Naive thymus-derived CD4-positive, alpha-beta T cell (primary cell): ENCODE measurements at regions of chr19 and their contacts with region 1.

Region 1: DNA sequence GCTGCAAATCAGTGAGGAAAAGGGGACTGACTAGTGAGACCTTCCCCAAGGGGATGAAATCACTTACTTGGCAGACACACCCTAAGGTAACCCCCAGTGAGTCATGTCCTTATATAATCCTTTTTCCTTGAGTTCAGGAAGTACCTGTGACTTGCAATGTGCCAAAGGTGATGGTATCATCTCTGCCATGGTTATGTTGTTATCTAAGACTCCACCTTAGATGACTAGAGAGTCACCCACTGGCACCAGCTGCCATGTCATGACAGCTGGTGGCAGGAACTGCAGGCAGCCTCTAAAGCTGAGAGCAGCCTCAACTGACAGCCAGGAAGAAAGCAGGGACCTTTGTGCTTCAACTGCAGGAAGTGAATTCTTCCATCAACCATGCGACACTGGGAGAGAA is 12.5 kb downstream of the PBX4 start:
- DNase-seq: peak in 7 of 9 donors; percentile 33 to 83 (median 61)
- ATAC-seq: peak; percentile 83
- H3K4me3 ChIP-seq: no peak overlapping the region
- H3K4me3 Mint-ChIP-seq: peak overlapping the region; percentile 42 to 76 (median 71)
- H3K27ac ChIP-seq: peak overlapping the region; percentile 46
- H3K27ac Mint-ChIP-seq: peak overlapping the region; percentile 66 to 96 (median 91)
- H3K4me1 ChIP-seq: peaks cover 42 to 54% of the 10 kb centered on the region in 2 donors
- H3K4me1 Mint-ChIP-seq: peaks cover 29 to 66% (median 55%) of the 10 kb centered on the region in 7 donors
- H3K27me3 ChIP-seq: no peaks in the 10 kb centered on the region
- H3K27me3 Mint-ChIP-seq: no peaks in the 10 kb centered on the region

Region 2: DNA sequence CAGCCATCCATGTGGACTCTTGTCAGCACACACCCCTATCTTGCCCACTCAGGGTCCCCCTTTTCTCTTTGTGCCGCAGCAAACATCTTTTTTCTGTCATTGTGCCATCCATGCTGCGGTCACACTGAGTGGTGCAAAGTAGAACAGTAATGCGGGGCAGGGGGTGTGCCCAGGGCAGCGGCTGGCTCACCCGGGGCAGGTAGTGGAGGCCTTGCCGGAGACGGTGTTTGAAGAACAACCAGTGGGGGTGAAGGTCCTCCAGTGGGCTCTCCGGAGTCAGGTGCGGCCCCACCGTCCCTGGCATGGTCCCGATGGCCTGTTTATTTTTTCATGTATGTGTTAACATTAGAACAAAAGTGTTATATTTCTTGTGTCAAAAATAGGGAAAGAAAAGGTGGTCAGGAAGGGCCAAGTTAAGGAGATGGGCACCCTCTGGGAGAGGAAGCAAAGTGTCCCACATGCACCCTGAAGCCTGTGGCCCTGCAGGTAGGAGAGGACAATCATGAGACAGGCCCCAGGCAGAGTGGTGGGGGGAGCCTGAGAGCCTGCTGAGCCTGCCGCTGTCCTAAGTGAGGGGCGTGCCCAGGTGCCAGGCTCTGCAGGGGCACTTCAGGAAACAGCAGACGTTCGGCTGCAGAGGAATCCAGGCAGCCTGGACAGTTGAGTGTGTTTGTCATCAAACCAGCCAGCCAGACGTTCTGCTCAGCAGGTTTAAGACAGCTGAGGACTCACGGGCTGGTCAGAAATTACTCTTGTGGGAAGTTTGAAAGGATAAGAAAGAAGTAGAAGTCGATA is 103.0 kb before region 1 on chr19:
- CTCF ChIA-PET with region 1: no interaction called
- POLR2A ChIA-PET with region 1: no interaction called
- intact Hi-C with region 1: no loop called
- DNase-seq: no peak
- ATAC-seq: no peak
- H3K4me3 ChIP-seq: no peak overlapping the region
- H3K4me3 Mint-ChIP-seq: peak overlapping the region in 1 of 10 donors; percentile 20
- H3K27ac ChIP-seq: no peak overlapping the region
- H3K27ac Mint-ChIP-seq: peak overlapping the region in 3 of 9 donors; percentile 30 to 77 (median 74)
- H3K4me1 ChIP-seq: no peaks in the 10 kb centered on the region
- H3K4me1 Mint-ChIP-seq: no peaks in the 10 kb centered on the region
- H3K27me3 ChIP-seq: no peaks in the 10 kb centered on the region
- H3K27me3 Mint-ChIP-seq: no peaks in the 10 kb centered on the region

Region 3: DNA sequence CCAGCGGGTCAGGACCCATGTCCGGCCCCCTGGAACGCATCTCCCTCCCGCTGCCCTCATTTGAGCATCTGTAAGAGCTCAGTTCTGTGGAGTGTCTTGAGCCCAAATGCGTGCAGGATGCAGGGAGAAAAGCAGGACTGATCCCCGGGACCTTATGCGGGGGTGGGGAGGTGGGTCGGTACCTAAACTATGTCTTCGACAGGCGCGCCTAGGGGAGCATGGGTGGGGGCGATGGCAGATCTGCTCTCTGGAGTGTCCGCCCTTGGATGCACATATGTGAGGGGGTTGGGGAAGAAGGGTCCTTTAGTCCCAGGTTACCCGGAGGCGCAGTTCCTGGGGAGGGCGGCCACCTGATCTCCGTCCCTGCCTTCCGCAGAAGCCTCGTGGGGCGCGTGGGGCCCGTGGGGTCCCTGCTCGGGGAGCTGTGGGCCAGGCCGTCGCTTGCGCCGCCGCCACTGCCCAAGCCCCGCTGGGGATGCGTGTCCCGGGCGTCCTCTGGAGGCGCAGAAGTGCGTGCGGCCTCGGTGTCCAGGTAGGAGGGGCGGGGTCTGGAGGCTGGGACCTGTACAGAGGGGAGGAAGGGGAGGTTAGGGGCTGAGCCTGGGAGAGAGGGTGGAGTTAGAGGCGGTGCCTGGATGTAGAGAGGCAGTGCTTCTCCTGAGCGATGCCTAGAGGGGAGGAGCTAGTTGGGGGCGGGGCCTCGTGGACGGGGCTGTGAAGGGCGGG is 65.1 kb before region 1 on chr19:
- CTCF ChIA-PET with region 1: no interaction called
- POLR2A ChIA-PET with region 1: no interaction called
- intact Hi-C with region 1: loop called in 1 of 2 experiments (anchors 2 kb)
- DNase-seq: peak; percentile 49 to 79 (median 69)
- ATAC-seq: peak; percentile 86
- H3K4me3 ChIP-seq: peak overlapping the region; percentile 50
- H3K4me3 Mint-ChIP-seq: peak overlapping the region; percentile 58 to 85 (median 77)
- H3K27ac ChIP-seq: no peak overlapping the region
- H3K27ac Mint-ChIP-seq: peak overlapping the region in 3 of 9 donors; percentile 43 to 81 (median 66)
- H3K4me1 ChIP-seq: peaks cover 15 to 25% of the 10 kb centered on the region in 2 donors
- H3K4me1 Mint-ChIP-seq: peaks cover 8 to 36% (median 29%) of the 10 kb centered on the region in 7 donors
- H3K27me3 ChIP-seq: no peaks in the 10 kb centered on the region
- H3K27me3 Mint-ChIP-seq: peaks cover 0 to 31% (median 4%) of the 10 kb centered on the region in 5 donors

Region 4: GRCh38 chr19:19554074-19555023 is 51.7 kb before region 1 on chr19:
- CTCF ChIA-PET with region 1: interaction called, 5 read pairs
- POLR2A ChIA-PET with region 1: interaction called, 22 read pairs
- intact Hi-C with region 1: no loop called
- DNase-seq: peak in 4 of 9 donors; percentile 37 to 73 (median 52)
- ATAC-seq: peak; percentile 67
- H3K4me3 ChIP-seq: no peak overlapping the region
- H3K4me3 Mint-ChIP-seq: no peak overlapping the region
- H3K27ac ChIP-seq: no peak overlapping the region
- H3K27ac Mint-ChIP-seq: peak overlapping the region in 2 of 9 donors; percentile 46 to 77
- H3K4me1 ChIP-seq: peaks cover 0 to 6% of the 10 kb centered on the region in 2 donors
- H3K4me1 Mint-ChIP-seq: peaks cover 7 to 16% (median 13%) of the 10 kb centered on the region in 7 donors
- H3K27me3 ChIP-seq: no peaks in the 10 kb centered on the region
- H3K27me3 Mint-ChIP-seq: no peaks in the 10 kb centered on the region

Region 5: DNA sequence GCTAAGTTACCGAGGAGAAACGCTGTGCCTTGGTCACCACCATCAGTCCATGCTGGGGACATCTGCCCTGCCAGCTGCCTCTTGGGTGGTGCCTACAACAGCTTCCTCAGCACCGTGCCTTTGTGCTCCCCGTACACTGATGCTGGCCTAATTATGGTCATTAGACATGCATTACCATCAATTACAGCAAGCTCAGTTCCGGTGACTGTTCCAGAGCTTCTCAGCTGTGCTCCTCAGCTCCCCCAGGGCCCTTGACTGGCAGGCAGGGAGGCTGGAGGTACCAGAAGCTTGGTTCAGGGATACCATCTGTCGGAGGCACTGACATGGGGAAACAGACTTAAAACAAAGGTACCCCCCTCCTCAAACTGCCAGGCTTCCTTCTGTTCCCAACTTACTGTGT is 27.8 kb before region 1 on chr19:
- CTCF ChIA-PET with region 1: no interaction called
- POLR2A ChIA-PET with region 1: no interaction called
- intact Hi-C with region 1: no loop called
- DNase-seq: no peak
- ATAC-seq: no peak
- H3K4me3 ChIP-seq: no peak overlapping the region
- H3K4me3 Mint-ChIP-seq: no peak overlapping the region
- H3K27ac ChIP-seq: no peak overlapping the region
- H3K27ac Mint-ChIP-seq: no peak overlapping the region
- H3K4me1 ChIP-seq: no peaks in the 10 kb centered on the region
- H3K4me1 Mint-ChIP-seq: peaks cover 7 to 36% (median 24%) of the 10 kb centered on the region in 7 donors
- H3K27me3 ChIP-seq: no peaks in the 10 kb centered on the region
- H3K27me3 Mint-ChIP-seq: no peaks in the 10 kb centered on the region

Region 6: GRCh38 chr19:19591133-19591825 is 14.7 kb before region 1 on chr19:
- CTCF ChIA-PET with region 1: interaction called, 4 read pairs
- POLR2A ChIA-PET with region 1: interaction called, 49 read pairs
- intact Hi-C with region 1: loop called in 1 of 2 experiments (anchors 1 kb)
- DNase-seq: peak in 2 of 9 donors; percentile 66 to 67
- ATAC-seq: peak; percentile 89
- H3K4me3 ChIP-seq: no peak overlapping the region
- H3K4me3 Mint-ChIP-seq: peak overlapping the region in 5 of 10 donors; percentile 12 to 81 (median 21)
- H3K27ac ChIP-seq: peak overlapping the region; percentile 54
- H3K27ac Mint-ChIP-seq: peak overlapping the region; percentile 10 to 89 (median 71)
- H3K4me1 ChIP-seq: peaks cover 17 to 30% of the 10 kb centered on the region in 2 donors
- H3K4me1 Mint-ChIP-seq: peaks cover 25 to 74% (median 54%) of the 10 kb centered on the region in 7 donors
- H3K27me3 ChIP-seq: no peaks in the 10 kb centered on the region
- H3K27me3 Mint-ChIP-seq: no peaks in the 10 kb centered on the region

Region 7: GRCh38 chr19:19618219-19619051 is 12.4 kb after region 1 on chr19 and contains the start of gene PBX4:
- CTCF ChIA-PET with region 1: interaction called, 3 read pairs
- POLR2A ChIA-PET with region 1: interaction called, 36 read pairs
- intact Hi-C with region 1: loop called (anchors 1 kb)
- DNase-seq: peak; percentile 97 to 99 (median 99)
- ATAC-seq: peak; percentile 99
- H3K4me3 ChIP-seq: peak within 1 kb of the TSS; percentile 86
- H3K4me3 Mint-ChIP-seq: peak within 1 kb of the TSS; percentile 79 to 99 (median 90)
- H3K27ac ChIP-seq: peak within 1 kb of the TSS; percentile 82
- H3K27ac Mint-ChIP-seq: peak within 1 kb of the TSS; percentile 80 to 98 (median 94)
- H3K4me1 ChIP-seq: peaks cover 16 to 23% of the 10 kb centered on the region in 2 donors
- H3K4me1 Mint-ChIP-seq: peaks cover 34 to 50% (median 45%) of the 10 kb centered on the region in 7 donors
- H3K27me3 ChIP-seq: no peaks in the 10 kb centered on the region
- H3K27me3 Mint-ChIP-seq: no peaks in the 10 kb centered on the region
- total RNA-seq, gene PBX4: 22.6 to 42.7 (median 42.0) TPM

Region 8: DNA sequence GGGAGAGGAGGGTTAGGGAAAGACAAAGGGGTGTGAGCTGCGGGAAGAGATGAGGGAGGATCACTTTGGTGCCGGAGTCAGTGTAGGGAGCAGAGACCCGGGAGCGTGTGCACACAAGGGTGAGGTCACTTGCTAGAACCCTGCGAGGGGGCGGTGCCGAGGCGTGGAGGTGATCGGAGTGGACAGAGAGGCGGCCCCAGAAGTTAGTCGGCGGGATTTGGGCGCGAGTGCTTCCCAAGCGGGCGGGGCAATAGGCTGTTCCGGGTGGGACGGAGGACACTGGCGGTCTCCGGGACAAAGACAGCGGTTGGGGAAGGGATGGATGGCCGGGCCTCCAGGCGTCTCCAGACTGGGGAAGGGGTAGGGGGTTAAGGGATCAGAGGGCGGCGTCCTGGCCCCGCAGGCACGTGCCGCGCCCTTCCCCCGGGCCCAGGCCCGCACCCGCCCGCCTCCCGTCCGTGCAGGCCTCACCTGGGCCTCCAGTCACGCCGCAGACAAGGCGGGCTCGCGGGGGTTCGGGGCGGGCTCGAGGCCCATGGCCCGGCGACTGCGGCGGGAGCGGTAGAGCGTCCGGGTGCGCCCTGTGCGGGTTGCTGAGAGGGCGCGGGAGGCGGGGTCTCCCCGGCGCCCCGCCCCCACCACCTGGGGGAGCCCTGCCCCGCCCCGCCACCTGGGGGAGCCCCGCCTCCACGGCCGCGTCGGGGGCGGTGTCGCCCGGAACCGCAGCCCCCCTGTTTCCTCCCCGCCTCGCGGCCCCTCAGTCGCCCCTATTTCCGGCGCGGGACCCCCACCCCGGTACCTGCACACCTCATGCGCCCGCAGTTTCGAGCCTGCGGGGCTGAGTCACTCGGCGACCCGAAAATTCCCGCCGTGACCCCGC is 21.8 kb after region 1 on chr19 and contains the start of gene LPAR2:
- CTCF ChIA-PET with region 1: interaction called, 3 read pairs
- POLR2A ChIA-PET with region 1: interaction called, 20 read pairs
- intact Hi-C with region 1: no loop called
- DNase-seq: peak; percentile 73 to 90 (median 82)
- ATAC-seq: peak; percentile 95
- H3K4me3 ChIP-seq: peak within 1 kb of the TSS; percentile 79
- H3K4me3 Mint-ChIP-seq: peak within 1 kb of the TSS; percentile 91 to 100 (median 96)
- H3K27ac ChIP-seq: peak within 1 kb of the TSS; percentile 92
- H3K27ac Mint-ChIP-seq: peak within 1 kb of the TSS; percentile 86 to 98 (median 95)
- H3K4me1 ChIP-seq: peaks cover 6 to 18% of the 10 kb centered on the region in 2 donors
- H3K4me1 Mint-ChIP-seq: peaks cover 17 to 32% (median 27%) of the 10 kb centered on the region in 7 donors
- H3K27me3 ChIP-seq: no peaks in the 10 kb centered on the region
- H3K27me3 Mint-ChIP-seq: no peaks in the 10 kb centered on the region
- total RNA-seq, gene LPAR2: 64.4 to 91.7 (median 75.0) TPM